CD14-positive monocyte (primary cell): ENCODE measurements at regions of chr14 and their contacts with region 1.

Region 1: GRCh38 chr14:74618078-74618952 is 6.3 kb upstream of the LTBP2 start:
- DNase-seq: peak; percentile 93 to 100 (median 98)
- H3K4me3 ChIP-seq: peak overlapping the region in 1 of 3 experiments; percentile 47
- H3K4me3 Mint-ChIP-seq: peak overlapping the region; percentile 37 to 62
- H3K27ac ChIP-seq: peak overlapping the region; percentile 79 to 91
- H3K27ac Mint-ChIP-seq: peak overlapping the region; percentile 87 to 98 (median 94)
- H3K4me1 ChIP-seq: peaks cover 77 to 83% of the 10 kb centered on the region in 2 donors
- H3K4me1 Mint-ChIP-seq: peaks cover 86% of the 10 kb centered on the region
- H3K27me3 ChIP-seq: peaks cover 0 to 3% of the 10 kb centered on the region in 2 donors
- H3K27me3 Mint-ChIP-seq: peaks cover 20 to 28% (median 23%) of the 10 kb centered on the region in 3 donors
- CTCF ChIP-seq: no peak

Region 2: GRCh38 chr14:74493343-74494261 is 124.7 kb before region 1 on chr14 and contains the start of gene ISCA2:
- intact Hi-C with region 1: loop called in 1 of 2 experiments (anchors 2 kb)
- DNase-seq: peak; percentile 98 to 99 (median 98)
- H3K4me3 ChIP-seq: peak within 1 kb of the TSS; percentile 75 to 97 (median 86)
- H3K4me3 Mint-ChIP-seq: peak within 1 kb of the TSS; percentile 84 to 92
- H3K27ac ChIP-seq: peak within 1 kb of the TSS; percentile 90 to 98
- H3K27ac Mint-ChIP-seq: peak within 1 kb of the TSS in 6 of 7 donors; percentile 87 to 94 (median 92)
- H3K4me1 ChIP-seq: peaks cover 50 to 57% of the 10 kb centered on the region in 2 donors
- H3K4me1 Mint-ChIP-seq: peaks cover 38% of the 10 kb centered on the region
- H3K27me3 ChIP-seq: no peaks in the 10 kb centered on the region
- H3K27me3 Mint-ChIP-seq: no peaks in the 10 kb centered on the region
- CTCF ChIP-seq: no peak
- polyA plus RNA-seq, gene ISCA2: 6.1 to 61.7 (median 55.9) TPM

Region 3: GRCh38 chr14:74712499-74713394 is 94.4 kb after region 1 on chr14 and contains the starts of genes AREL1 and FCF1:
- intact Hi-C with region 1: loop called (anchors 2 to 5 kb)
- DNase-seq: peak; percentile 91 to 96 (median 94)
- H3K4me3 ChIP-seq: peak within 1 kb of the TSS; percentile 92 to 95 (median 94)
- H3K4me3 Mint-ChIP-seq: peak within 1 kb of the TSS; percentile 92 to 97
- H3K27ac ChIP-seq: peak within 1 kb of the TSS; percentile 78 to 97
- H3K27ac Mint-ChIP-seq: peak within 1 kb of the TSS; percentile 97 to 100 (median 98)
- H3K4me1 ChIP-seq: peaks cover 19 to 27% of the 10 kb centered on the region in 2 donors
- H3K4me1 Mint-ChIP-seq: peaks cover 31% of the 10 kb centered on the region
- H3K27me3 ChIP-seq: no peaks in the 10 kb centered on the region
- H3K27me3 Mint-ChIP-seq: peaks cover 0 to 2% (median 0%) of the 10 kb centered on the region in 3 donors
- CTCF ChIP-seq: no peak
- polyA plus RNA-seq, gene AREL1: 12.5 to 23.3 (median 20.0) TPM
- polyA plus RNA-seq, gene FCF1: 14.8 to 22.6 (median 17.5) TPM